ENCODE measurements at regions of chr1 and their contacts with region 1.

Region 1: DNA sequence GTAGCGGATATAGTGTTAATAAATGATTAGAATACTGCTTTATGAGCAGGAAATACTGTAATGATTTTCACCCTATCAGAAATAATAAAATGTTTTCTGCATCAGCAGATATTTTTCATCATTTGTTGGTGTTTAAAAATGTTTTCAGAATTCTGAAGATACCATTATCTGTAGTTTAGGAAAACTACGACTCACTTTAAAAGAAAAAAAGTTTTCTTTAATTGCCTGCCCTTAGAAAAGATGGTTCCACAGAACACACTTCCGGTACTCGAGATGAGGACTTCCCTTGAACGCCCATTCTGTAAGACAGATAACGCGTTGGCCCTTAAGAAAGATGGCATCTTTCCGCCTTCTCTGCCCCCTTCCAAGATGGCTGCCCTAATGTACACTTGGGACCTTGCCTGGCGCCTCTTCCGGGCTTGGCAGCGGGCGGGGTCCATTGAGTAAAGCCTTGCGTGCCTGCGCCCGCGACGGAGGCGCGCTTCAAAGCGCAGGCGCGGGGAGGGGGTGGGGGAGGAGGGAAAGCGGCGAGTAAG is at the start of gene SZRD1:
- DNase-seq: peak; percentile 94 to 99
- H3K4me3 ChIP-seq: peak within 1 kb of the TSS; percentile 76 to 91
- H3K27ac ChIP-seq: peak within 1 kb of the TSS; percentile 97
- H3K4me1 ChIP-seq: peaks cover 10 to 54% of the 10 kb centered on the region in 2 donors
- H3K27me3 ChIP-seq: no peaks in the 10 kb centered on the region
- CTCF ChIP-seq: no peak
- total RNA-seq, gene SZRD1: 106 TPM

Region 2: GRCh38 chr1:16009030-16009709 is 357.6 kb before region 1 on chr1:
- intact Hi-C with region 1: loop called (anchors 5 kb)
- DNase-seq: peak in 1 of 2 donors; percentile 89
- H3K4me3 ChIP-seq: no peak overlapping the region
- H3K27ac ChIP-seq: no peak overlapping the region
- H3K4me1 ChIP-seq: peaks cover 9 to 18% of the 10 kb centered on the region in 2 donors
- H3K27me3 ChIP-seq: no peaks in the 10 kb centered on the region
- CTCF ChIP-seq: peak; percentile 97 to 98 (median 98)

Region 3: DNA sequence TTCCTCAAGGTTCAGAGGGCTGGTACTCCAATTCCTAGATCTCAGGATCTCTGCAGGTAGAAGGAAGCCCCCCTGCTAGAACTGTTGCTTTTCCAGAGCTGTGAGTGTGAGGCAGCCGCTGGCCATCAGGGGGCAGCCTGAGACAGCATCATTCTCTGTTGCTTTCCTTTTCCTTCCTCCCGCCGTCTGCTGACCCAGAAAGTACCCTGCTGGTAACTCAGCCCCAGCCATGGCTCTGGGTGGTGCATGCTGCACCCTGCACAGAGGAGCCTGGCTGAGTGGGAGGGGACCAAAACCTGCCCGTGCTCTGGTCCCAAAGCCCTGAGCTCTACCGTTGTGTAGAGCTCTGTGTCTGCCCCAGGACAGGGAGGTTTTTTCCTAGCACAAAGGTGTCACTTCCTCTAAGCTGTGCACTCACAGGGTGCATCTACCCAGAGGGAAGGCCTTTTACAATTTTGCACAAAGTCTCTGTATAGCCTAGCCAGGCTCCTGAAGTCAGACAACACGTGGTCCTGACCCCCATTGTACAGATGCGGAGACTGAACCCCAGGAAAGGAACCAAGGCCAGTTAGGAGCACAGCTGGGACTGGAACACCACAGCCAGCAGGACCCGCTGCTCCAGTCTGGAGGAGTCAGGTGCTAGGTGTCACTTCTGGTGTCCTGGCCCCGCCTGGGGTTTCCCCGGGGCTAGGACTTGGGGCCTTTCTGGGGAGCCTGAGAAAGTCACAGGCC is 287.7 kb before region 1 on chr1:
- intact Hi-C with region 1: loop called (anchors 5 kb)
- DNase-seq: peak in 1 of 2 donors; percentile 90
- H3K4me3 ChIP-seq: no peak overlapping the region
- H3K27ac ChIP-seq: peak overlapping the region in 1 of 2 donors; percentile 19
- H3K4me1 ChIP-seq: peaks cover 8 to 15% of the 10 kb centered on the region in 2 donors
- H3K27me3 ChIP-seq: no peaks in the 10 kb centered on the region
- CTCF ChIP-seq: peak; percentile 88 to 97 (median 92)

Region 4: GRCh38 chr1:16146279-16147155 is 220.3 kb before region 1 on chr1:
- intact Hi-C with region 1: loop called (anchors 5 kb)
- DNase-seq: peak in 1 of 2 donors; percentile 89
- H3K4me3 ChIP-seq: peak overlapping the region; percentile 46 to 59
- H3K27ac ChIP-seq: peak overlapping the region; percentile 84 to 94
- H3K4me1 ChIP-seq: peaks cover 13 to 53% of the 10 kb centered on the region in 2 donors
- H3K27me3 ChIP-seq: no peaks in the 10 kb centered on the region
- CTCF ChIP-seq: no peak

Region 5: GRCh38 chr1:16386454-16387113 is 19.8 kb after region 1 on chr1:
- intact Hi-C with region 1: loop called (anchors 2 kb)
- DNase-seq: peak in 1 of 2 donors; percentile 79
- H3K4me3 ChIP-seq: peak overlapping the region; percentile 50 to 60
- H3K27ac ChIP-seq: peak overlapping the region; percentile 83 to 84
- H3K4me1 ChIP-seq: peaks cover 20 to 62% of the 10 kb centered on the region in 2 donors
- H3K27me3 ChIP-seq: no peaks in the 10 kb centered on the region
- CTCF ChIP-seq: no peak

Region 6: DNA sequence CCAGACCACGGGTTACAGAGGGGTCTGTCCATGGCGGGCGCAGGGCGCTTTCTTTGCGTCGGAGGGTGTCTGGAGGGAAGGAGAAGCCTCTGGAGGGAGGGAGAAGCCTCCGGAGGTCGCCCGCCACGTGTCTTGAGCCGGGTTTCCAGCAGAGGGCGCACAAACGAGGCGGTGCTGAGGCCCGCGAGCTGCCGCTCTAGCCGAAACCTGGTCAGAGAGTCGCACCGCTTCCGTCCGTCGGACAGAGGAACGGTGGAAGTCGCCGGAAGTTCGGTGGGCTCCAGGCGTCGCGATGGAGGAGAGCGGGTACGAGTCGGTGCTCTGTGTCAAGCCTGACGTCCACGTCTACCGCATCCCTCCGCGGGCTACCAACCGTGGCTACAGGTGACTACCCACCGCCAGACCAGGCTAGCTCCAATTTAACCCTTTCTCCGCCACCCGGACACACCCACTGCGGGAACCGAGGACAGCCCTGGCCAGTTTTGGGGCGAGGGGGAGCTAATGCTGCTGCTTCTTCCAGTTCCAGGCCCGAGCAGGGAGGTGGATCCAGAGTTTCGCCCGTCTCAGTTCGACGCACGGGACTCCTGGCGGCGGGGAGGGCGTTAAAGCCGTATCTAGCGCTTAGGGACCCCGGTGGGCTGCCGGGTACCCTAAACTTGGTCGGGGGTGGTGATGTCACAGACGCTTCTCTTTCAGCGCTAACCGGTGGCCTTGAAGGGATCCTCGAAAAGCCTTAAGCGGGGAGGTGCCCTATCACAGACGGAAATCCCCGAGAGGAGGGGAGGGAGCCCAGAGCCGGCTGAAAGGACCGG is 73.9 kb after region 1 on chr1 and contains the start of gene NECAP2:
- intact Hi-C with region 1: loop called (anchors 1 kb)
- DNase-seq: peak; percentile 39 to 95
- H3K4me3 ChIP-seq: peak within 1 kb of the TSS; percentile 77 to 97
- H3K27ac ChIP-seq: peak within 1 kb of the TSS; percentile 72 to 75
- H3K4me1 ChIP-seq: peaks cover 4 to 24% of the 10 kb centered on the region in 2 donors
- H3K27me3 ChIP-seq: no peaks in the 10 kb centered on the region
- CTCF ChIP-seq: peak; percentile 83 to 92 (median 89)
- total RNA-seq, gene NECAP2: 28.6 TPM

Region 7: DNA sequence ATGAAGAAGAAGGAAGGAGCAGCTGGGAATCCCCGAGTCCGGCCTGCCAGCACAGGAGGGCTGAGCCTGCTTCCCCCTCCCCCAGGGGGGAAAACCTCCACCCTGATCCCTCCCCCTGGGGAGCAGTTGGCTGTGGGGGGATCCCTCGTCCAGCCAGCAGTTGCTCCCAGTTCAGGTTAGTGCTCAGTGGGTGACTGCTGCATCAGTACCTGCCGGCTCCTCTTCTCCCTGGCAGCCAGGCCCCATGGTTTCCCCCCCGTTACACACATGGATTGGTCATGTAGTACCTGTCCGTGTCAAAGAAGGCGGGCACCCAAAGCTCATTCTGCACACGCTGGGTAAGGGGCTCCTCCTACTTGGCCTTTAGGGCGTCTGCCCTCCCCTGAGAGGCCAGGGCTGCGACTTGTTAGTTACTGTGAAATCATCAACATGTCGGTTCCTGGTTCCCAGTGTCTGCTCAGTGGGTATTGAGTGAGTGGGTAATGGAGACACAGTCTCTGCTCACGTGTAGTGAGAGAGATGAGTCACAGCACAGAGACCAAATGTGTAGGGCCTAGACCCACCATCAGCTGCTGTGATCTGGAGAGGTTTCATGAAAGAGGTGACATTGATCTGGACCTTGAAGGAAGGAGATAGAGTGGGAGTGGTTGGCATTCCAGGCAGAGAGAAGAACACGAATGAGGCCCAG is 85.2 kb after region 1 on chr1:
- intact Hi-C with region 1: no loop called
- DNase-seq: no peak
- H3K4me3 ChIP-seq: no peak overlapping the region
- H3K27ac ChIP-seq: no peak overlapping the region
- H3K4me1 ChIP-seq: no peaks in the 10 kb centered on the region
- H3K27me3 ChIP-seq: no peaks in the 10 kb centered on the region
- CTCF ChIP-seq: no peak